K562 (cell line): ENCODE measurements at regions of chr5 and their contacts with region 1.

Region 1: DNA sequence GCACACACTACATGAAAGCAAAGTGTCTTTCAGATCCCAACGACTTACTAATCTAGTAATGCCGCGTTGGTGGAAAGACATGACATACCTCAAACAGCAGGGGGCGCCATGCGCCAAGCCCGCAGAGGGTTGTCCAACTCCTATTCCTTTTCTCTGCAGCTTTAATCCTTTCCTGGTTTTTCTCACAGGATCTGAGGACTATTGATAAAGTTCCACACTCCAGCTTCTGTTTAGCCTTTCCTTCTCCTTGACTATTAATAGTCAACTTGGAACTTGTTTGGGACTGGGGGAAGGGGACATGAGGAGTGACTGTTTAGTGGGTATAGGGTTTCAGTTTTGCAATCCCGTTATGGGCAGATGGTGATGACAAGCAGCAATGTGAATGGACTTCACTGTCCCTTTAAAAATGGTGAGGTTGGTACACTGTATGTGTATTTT is 62.9 kb downstream of the OTULIN start:
- DNase-seq: peak; percentile 72 to 84 (median 81)
- ATAC-seq: peak; percentile 89
- H3K4me3 ChIP-seq: no peak overlapping the region
- H3K27ac ChIP-seq: no peak overlapping the region
- H3K4me1 ChIP-seq: peaks cover 3 to 5% of the 10 kb centered on the region in 2 experiments; a peak in 3 of 5 replicates
- H3K27me3 ChIP-seq: peaks cover 20 to 57% of the 10 kb centered on the region in 2 experiments
- CTCF ChIP-seq: peak; percentile 91 to 97 (median 97)
- EP300 ChIP-seq: no peak
- POLR2A ChIP-seq: no peak
- RAD21 ChIP-seq: peak; percentile 98 to 99

Region 2: GRCh38 chr5:14685757-14686156 is 41.7 kb before region 1 on chr5:
- CTCF ChIA-PET with region 1: no interaction called
- POLR2A ChIA-PET with region 1: no interaction called
- in situ Hi-C with region 1: no loop called
- intact Hi-C with region 1: loop called (anchors 5 kb)
- DNase-seq: peak in 2 of 4 experiments; percentile 38 to 47
- ATAC-seq: peak; percentile 80
- H3K4me3 ChIP-seq: no peak overlapping the region
- H3K27ac ChIP-seq: no peak overlapping the region
- H3K4me1 ChIP-seq: no peaks in the 10 kb centered on the region
- H3K27me3 ChIP-seq: no peaks in the 10 kb centered on the region
- CTCF ChIP-seq: peak; percentile 53 to 75 (median 71); a peak in 5 of 6 replicates
- EP300 ChIP-seq: no peak
- POLR2A ChIP-seq: no peak
- RAD21 ChIP-seq: peak; percentile 71 to 76

Region 3: DNA sequence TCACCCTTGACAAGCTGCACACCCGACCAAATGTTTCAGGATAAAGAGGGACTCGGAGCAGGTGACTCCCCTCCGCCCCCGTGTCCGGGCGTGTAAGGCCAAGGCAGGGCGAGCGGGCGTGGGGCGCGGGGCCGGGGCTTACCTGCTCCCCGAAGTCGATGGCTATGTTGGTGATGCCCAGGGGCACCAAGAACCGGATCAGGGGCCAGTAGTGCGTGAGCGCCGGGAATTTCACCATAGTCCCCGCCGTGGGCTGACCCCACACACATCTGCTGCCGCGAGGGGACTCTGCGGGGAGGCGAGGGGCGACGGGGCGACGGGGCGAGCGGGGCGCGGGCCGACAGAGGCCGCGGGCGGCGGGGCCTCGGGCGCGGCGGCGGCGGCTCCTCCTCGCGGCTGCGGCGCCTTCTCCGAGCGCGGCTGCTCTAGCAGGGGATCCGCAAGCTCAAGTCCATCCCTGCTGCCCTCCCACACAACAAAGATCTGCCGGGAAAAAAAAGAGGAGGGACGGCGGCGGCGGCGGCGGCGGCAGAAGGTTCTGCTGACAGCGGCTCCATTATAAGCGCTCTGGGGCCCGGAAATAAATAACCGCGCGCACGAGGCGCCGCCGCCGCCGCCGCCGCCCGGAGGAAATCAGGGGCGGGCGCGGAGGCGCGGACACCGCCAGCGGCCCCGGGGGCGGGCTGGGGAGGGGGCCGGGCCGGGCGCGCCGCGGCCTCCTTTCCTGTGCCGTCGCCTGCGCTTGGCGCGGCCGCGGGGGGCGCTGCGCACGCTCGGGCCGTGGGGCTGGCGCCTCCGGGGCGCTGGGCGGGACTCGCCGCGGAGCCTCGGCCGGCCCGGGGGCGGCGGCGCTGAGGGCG is 144.0 kb after region 1 on chr5 and contains the start of gene ANKH:
- CTCF ChIA-PET with region 1: interaction called, 3 read pairs
- POLR2A ChIA-PET with region 1: interaction called, 3 read pairs
- in situ Hi-C with region 1: no loop called
- intact Hi-C with region 1: loop called (anchors 10 kb)
- DNase-seq: peak; percentile 87 to 90 (median 89)
- ATAC-seq: peak; percentile 97
- H3K4me3 ChIP-seq: peak within 1 kb of the TSS; percentile 57
- H3K27ac ChIP-seq: no peak within 1 kb of the TSS
- H3K4me1 ChIP-seq: peaks cover 0 to 14% of the 10 kb centered on the region in 2 experiments; a peak in 3 of 5 replicates
- H3K27me3 ChIP-seq: peaks cover 13 to 19% of the 10 kb centered on the region in 2 experiments
- CTCF ChIP-seq: peak in 2 of 3 experiments; percentile 49 to 50; a peak in 4 of 6 replicates
- EP300 ChIP-seq: no peak
- POLR2A ChIP-seq: no peak
- RAD21 ChIP-seq: no peak
- polyA plus RNA-seq, gene ANKH: 0.79 to 0.99 TPM

Region 4: GRCh38 chr5:15003511-15003920 is 276.1 kb after region 1 on chr5:
- CTCF ChIA-PET with region 1: interaction called, 35 read pairs
- POLR2A ChIA-PET with region 1: interaction called, 3 read pairs
- in situ Hi-C with region 1: loop called (anchors 5 kb)
- intact Hi-C with region 1: loop called (anchors 1 kb)
- DNase-seq: peak; percentile 68 to 80 (median 74)
- ATAC-seq: peak; percentile 98
- H3K4me3 ChIP-seq: no peak overlapping the region
- H3K27ac ChIP-seq: no peak overlapping the region
- H3K4me1 ChIP-seq: no peaks in the 10 kb centered on the region
- H3K27me3 ChIP-seq: peaks cover 0 to 4% of the 10 kb centered on the region in 2 experiments; a peak in 1 of 5 replicates
- CTCF ChIP-seq: peak; percentile 74 to 91 (median 81)
- EP300 ChIP-seq: no peak
- POLR2A ChIP-seq: no peak
- RAD21 ChIP-seq: peak; percentile 86 to 91

Region 5: GRCh38 chr5:15013654-15014463 is 286.4 kb after region 1 on chr5:
- CTCF ChIA-PET with region 1: interaction called, 10 read pairs
- POLR2A ChIA-PET with region 1: no interaction called
- in situ Hi-C with region 1: no loop called
- intact Hi-C with region 1: no loop called
- DNase-seq: peak; percentile 41 to 58 (median 47)
- ATAC-seq: peak; percentile 94
- H3K4me3 ChIP-seq: no peak overlapping the region
- H3K27ac ChIP-seq: no peak overlapping the region
- H3K4me1 ChIP-seq: no peaks in the 10 kb centered on the region; a peak in 1 of 5 replicates
- H3K27me3 ChIP-seq: no peaks in the 10 kb centered on the region
- CTCF ChIP-seq: peak; percentile 45 to 79 (median 63); a peak in 5 of 6 replicates
- EP300 ChIP-seq: no peak
- POLR2A ChIP-seq: no peak
- RAD21 ChIP-seq: peak; percentile 78 to 86